ENCODE measurements at regions of chr1 and their contacts with region 1.

Region 1: DNA sequence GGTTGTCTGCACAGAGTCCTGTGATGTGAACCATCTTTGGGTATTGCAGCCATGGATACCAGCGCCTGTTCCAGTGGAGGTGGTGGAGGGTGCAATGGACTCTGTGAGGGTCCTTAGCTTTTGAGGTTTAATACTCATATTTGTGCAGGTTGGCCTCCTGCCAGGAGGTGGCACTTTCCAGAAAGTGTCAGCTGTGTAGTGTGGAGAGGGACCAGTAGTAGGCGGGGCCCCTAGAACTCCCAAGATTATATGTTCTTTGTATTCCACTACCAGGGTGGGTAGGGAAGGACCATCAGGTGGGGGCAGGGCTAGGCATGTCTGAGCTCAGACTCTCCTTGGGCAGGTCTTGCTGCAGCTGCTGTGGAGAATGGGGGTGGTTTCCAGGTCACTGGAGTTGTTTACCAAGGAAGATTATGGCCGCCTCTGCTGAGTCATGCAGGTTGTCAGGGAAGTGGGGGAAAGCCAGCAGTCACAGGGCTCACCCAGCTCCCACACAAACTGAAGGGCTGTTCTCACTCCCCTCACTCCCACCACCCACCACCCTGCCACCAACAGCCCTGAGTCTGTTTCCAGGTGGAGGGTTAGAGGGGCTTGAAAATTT is 31.2 kb upstream of the ZNF678 start:
- DNase-seq: no peak
- H3K4me3 ChIP-seq: no peak overlapping the region
- H3K27ac ChIP-seq: no peak overlapping the region
- H3K4me1 ChIP-seq: no peaks in the 10 kb centered on the region
- H3K27me3 ChIP-seq: no peaks in the 10 kb centered on the region
- CTCF ChIP-seq: no peak
- POLR2A ChIP-seq: no peak

Region 2: GRCh38 chr1:226920446-226920894 is 611.6 kb before region 1 on chr1:
- intact Hi-C with region 1: no loop called
- DNase-seq: peak; percentile 83 to 97 (median 95)
- H3K4me3 ChIP-seq: no peak overlapping the region
- H3K27ac ChIP-seq: peak overlapping the region; percentile 61 to 87 (median 78)
- H3K4me1 ChIP-seq: peaks cover 26 to 39% of the 10 kb centered on the region in 2 donors
- H3K27me3 ChIP-seq: no peaks in the 10 kb centered on the region
- CTCF ChIP-seq: no peak
- POLR2A ChIP-seq: peak in 1 of 2 donors; percentile 72

Region 3: DNA sequence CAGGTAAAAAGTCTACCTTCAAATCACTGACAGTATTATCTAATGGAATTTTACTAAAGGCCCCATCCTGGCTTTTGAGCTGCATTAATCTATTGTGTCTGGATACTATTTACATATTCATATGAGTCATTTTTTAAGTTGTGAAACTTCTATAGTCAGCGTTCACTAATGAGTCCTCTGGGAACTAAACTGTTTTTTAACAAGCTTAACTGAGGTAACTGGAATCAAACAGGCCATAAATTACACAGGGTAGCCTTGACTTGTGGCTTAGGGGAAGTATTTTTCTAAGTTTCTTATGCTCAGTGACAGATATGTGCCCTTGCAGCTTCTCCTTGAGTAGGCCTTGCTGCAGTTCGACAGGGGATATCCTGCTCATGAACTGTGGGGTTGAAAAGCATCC is 134.2 kb after region 1 on chr1:
- intact Hi-C with region 1: loop called in 1 of 2 experiments (anchors 10 kb)
- DNase-seq: no peak
- H3K4me3 ChIP-seq: no peak overlapping the region
- H3K27ac ChIP-seq: no peak overlapping the region
- H3K4me1 ChIP-seq: no peaks in the 10 kb centered on the region
- H3K27me3 ChIP-seq: no peaks in the 10 kb centered on the region
- CTCF ChIP-seq: no peak
- POLR2A ChIP-seq: no peak

Measured in adrenal gland (tissue), 19 donors.